HCT116 (cell line): ENCODE measurements at regions of chr6 and their contacts with region 1.

Region 1: GRCh38 chr6:150470960-150471665 is 102.3 kb downstream of the IYD start:
- DNase-seq: no peak
- ATAC-seq: no peak
- H3K4me3 ChIP-seq: no peak overlapping the region
- H3K27ac ChIP-seq: no peak overlapping the region
- H3K4me1 ChIP-seq: peaks cover 0 to 1% of the 10 kb centered on the region in 2 experiments; a peak in 2 of 4 replicates
- H3K27me3 ChIP-seq: no peaks in the 10 kb centered on the region
- CTCF ChIP-seq: no peak
- POLR2A ChIP-seq: no peak
- RAD21 ChIP-seq: no peak

Region 2: DNA sequence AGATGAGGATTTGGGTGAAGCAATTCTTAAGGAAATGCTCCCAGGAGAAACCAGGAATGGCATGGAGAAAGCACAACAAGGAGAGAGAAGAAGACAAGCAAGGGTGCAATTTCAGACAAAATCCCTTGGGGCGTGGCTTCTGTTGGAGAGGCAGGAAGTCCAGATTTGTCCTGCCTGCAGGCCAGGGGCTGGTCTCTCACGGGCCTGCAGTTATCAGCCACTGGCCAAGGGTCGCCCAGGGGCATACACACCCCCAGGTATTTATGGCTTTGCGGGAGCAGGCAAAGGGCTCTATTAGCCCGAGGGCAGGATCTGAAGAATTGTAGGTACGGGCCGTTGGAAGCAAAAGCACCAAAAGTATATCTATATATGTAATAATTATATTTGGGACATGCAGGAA is 14.7 kb before region 1 on chr6:
- CTCF ChIA-PET with region 1: no interaction called
- POLR2A ChIA-PET with region 1: no interaction called
- RAD21 ChIA-PET with region 1: no interaction called
- intact Hi-C with region 1: no loop called
- DNase-seq: no peak
- ATAC-seq: 0 out of 2 replicates have a peak, but pooled peaks have one; percentile 40
- H3K4me3 ChIP-seq: no peak overlapping the region
- H3K27ac ChIP-seq: no peak overlapping the region
- H3K4me1 ChIP-seq: peaks cover 0 to 4% of the 10 kb centered on the region in 2 experiments; a peak in 1 of 4 replicates
- H3K27me3 ChIP-seq: no peaks in the 10 kb centered on the region
- CTCF ChIP-seq: no peak
- POLR2A ChIP-seq: no peak
- RAD21 ChIP-seq: no peak

Region 3: GRCh38 chr6:150590448-150590847 is 119.3 kb after region 1 on chr6:
- CTCF ChIA-PET with region 1: no interaction called
- POLR2A ChIA-PET with region 1: no interaction called
- RAD21 ChIA-PET with region 1: no interaction called
- intact Hi-C with region 1: loop called (anchors 5 kb)
- DNase-seq: no peak
- ATAC-seq: no peak
- H3K4me3 ChIP-seq: no peak overlapping the region
- H3K27ac ChIP-seq: no peak overlapping the region
- H3K4me1 ChIP-seq: no peaks in the 10 kb centered on the region
- H3K27me3 ChIP-seq: no peaks in the 10 kb centered on the region
- CTCF ChIP-seq: no peak
- POLR2A ChIP-seq: no peak
- RAD21 ChIP-seq: no peak